Natural killer cell (primary cell): ENCODE measurements at regions of chr6 and their contacts with region 1.

Region 1: GRCh38 chr6:149028767-149029405 is 282.1 kb downstream of the UST start:
- DNase-seq: peak; percentile 34 to 92
- ATAC-seq: peak; percentile 70 to 79 (median 71)
- H3K4me3 ChIP-seq: no peak overlapping the region
- H3K4me3 Mint-ChIP-seq: no peak overlapping the region
- H3K27ac ChIP-seq: no peak overlapping the region
- H3K27ac Mint-ChIP-seq: no peak overlapping the region
- H3K4me1 ChIP-seq: peaks cover 15% of the 10 kb centered on the region
- H3K4me1 Mint-ChIP-seq: peaks cover 5 to 11% of the 10 kb centered on the region in 2 donors
- H3K27me3 ChIP-seq: no peaks in the 10 kb centered on the region
- H3K27me3 Mint-ChIP-seq: no peaks in the 10 kb centered on the region
- CTCF ChIP-seq: peak; percentile 86

Region 2: GRCh38 chr6:149071997-149072396 is 43.1 kb after region 1 on chr6:
- intact Hi-C with region 1: no loop called
- DNase-seq: no peak
- ATAC-seq: no peak
- H3K4me3 ChIP-seq: no peak overlapping the region
- H3K4me3 Mint-ChIP-seq: no peak overlapping the region
- H3K27ac ChIP-seq: no peak overlapping the region
- H3K27ac Mint-ChIP-seq: no peak overlapping the region
- H3K4me1 ChIP-seq: no peaks in the 10 kb centered on the region
- H3K4me1 Mint-ChIP-seq: peaks cover 0 to 5% of the 10 kb centered on the region in 2 donors
- H3K27me3 ChIP-seq: no peaks in the 10 kb centered on the region
- H3K27me3 Mint-ChIP-seq: no peaks in the 10 kb centered on the region
- CTCF ChIP-seq: no peak

Region 3: DNA sequence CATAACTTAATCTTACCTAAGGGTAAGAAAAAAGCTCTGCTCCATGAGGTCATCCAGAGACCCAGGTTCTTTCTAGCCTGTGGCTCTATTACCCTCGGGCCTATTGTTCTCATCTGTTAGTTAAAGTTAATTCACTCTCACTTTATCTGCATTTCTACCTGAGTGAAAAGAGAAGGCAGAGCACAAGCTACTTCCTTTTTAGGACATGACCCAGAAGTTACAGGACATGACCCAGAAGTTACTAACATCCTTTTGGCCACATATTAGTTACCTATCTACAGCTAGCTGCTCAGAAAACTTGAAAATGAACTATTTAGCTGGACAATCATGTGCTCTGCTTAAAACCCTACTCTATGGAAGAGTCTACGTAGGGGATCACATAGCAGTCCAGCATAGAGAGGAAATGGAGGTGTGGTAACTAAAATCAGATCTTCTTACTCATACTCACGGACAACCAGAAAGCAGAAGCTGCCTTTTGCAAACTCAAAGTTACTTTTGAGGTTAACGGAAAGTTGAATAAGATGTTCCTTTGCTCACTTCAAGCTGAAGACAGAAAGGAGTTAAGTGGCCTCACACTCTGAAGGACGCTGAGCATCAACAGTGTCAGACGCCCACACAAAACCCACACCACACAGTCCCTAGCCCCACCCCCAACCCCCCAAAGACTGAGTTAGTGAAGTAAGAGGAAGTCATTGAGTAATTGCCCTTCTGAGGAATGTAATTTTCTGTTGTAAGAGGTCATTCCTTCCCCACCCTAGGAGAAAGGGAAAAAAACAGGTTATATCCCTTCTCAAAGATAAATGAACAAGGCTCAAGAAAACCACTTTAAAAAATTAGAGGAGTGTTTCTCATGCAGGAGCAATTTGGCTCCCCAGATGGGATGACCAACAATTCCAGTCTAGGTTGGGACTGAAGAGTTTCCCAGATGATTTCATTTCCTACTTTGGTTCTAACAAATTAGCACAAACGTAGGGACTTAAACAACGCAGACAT is 242.8 kb after region 1 on chr6:
- intact Hi-C with region 1: no loop called
- DNase-seq: peak in 1 of 2 donors; percentile 52
- ATAC-seq: peak; percentile 79 to 91 (median 88)
- H3K4me3 ChIP-seq: no peak overlapping the region
- H3K4me3 Mint-ChIP-seq: peak overlapping the region; percentile 50
- H3K27ac ChIP-seq: peak overlapping the region; percentile 63
- H3K27ac Mint-ChIP-seq: peak overlapping the region; percentile 36 to 76
- H3K4me1 ChIP-seq: peaks cover 29% of the 10 kb centered on the region
- H3K4me1 Mint-ChIP-seq: peaks cover 25 to 27% of the 10 kb centered on the region in 2 donors
- H3K27me3 ChIP-seq: no peaks in the 10 kb centered on the region
- H3K27me3 Mint-ChIP-seq: peaks cover 3 to 16% of the 10 kb centered on the region in 2 donors
- CTCF ChIP-seq: no peak

Region 4: DNA sequence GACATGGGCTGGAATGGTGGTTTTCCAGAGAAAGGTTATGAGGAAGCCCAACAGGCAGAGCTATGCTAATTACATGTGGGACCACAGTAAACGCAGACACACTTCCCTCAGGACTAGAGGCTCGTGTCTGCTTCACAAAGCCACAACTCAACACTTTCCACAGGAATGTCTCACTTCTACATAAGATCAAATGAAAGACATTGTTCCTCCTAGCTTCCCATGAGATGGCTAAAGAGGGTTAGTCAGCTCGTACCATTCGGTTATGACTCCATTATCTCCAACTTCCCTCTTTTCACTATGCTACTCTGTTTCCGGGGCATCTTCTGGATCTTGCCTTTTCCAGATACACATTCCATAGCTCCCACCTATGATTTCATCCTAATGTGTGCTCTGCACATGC is 485.0 kb after region 1 on chr6:
- intact Hi-C with region 1: loop called (anchors 1 kb)
- DNase-seq: no peak
- ATAC-seq: no peak
- H3K4me3 ChIP-seq: no peak overlapping the region
- H3K4me3 Mint-ChIP-seq: no peak overlapping the region
- H3K27ac ChIP-seq: no peak overlapping the region
- H3K27ac Mint-ChIP-seq: peak overlapping the region in 1 of 2 donors; percentile 49
- H3K4me1 ChIP-seq: no peaks in the 10 kb centered on the region
- H3K4me1 Mint-ChIP-seq: peaks cover 5 to 6% of the 10 kb centered on the region in 2 donors
- H3K27me3 ChIP-seq: no peaks in the 10 kb centered on the region
- H3K27me3 Mint-ChIP-seq: no peaks in the 10 kb centered on the region
- CTCF ChIP-seq: no peak